Activated T-helper 1 cell treated with anti-CD3 and anti-CD28 coated beads, Interleukin-12 subunit alpha, Interleukin-12 subunit beta, Interleukin-2, Interleukin-4 antibody, amounts not matched to agents 30 ng/mL and 10 ng/mL and 1 ng/mL, durations not matched to agents 14 hours and 24 hours and 36 hours (primary cell): ENCODE measurements at regions of chr1 and their contacts with region 1.

Region 1: GRCh38 chr1:16217061-16217785 is 4.8 kb upstream of the ARHGEF19 start:
- DNase-seq: peak; percentile 92
- H3K4me3 Mint-ChIP-seq: peak overlapping the region; percentile 83
- H3K27ac Mint-ChIP-seq: no peak overlapping the region
- H3K4me1 Mint-ChIP-seq: peaks cover 22% of the 10 kb centered on the region
- H3K27me3 Mint-ChIP-seq: peaks cover 4% of the 10 kb centered on the region

Region 2: GRCh38 chr1:16101623-16102022 is 115.6 kb before region 1 on chr1:
- intact Hi-C with region 1: no loop called
- DNase-seq: no peak
- H3K4me3 Mint-ChIP-seq: no peak overlapping the region
- H3K27ac Mint-ChIP-seq: no peak overlapping the region
- H3K4me1 Mint-ChIP-seq: no peaks in the 10 kb centered on the region
- H3K27me3 Mint-ChIP-seq: peaks cover 27% of the 10 kb centered on the region

Region 3: DNA sequence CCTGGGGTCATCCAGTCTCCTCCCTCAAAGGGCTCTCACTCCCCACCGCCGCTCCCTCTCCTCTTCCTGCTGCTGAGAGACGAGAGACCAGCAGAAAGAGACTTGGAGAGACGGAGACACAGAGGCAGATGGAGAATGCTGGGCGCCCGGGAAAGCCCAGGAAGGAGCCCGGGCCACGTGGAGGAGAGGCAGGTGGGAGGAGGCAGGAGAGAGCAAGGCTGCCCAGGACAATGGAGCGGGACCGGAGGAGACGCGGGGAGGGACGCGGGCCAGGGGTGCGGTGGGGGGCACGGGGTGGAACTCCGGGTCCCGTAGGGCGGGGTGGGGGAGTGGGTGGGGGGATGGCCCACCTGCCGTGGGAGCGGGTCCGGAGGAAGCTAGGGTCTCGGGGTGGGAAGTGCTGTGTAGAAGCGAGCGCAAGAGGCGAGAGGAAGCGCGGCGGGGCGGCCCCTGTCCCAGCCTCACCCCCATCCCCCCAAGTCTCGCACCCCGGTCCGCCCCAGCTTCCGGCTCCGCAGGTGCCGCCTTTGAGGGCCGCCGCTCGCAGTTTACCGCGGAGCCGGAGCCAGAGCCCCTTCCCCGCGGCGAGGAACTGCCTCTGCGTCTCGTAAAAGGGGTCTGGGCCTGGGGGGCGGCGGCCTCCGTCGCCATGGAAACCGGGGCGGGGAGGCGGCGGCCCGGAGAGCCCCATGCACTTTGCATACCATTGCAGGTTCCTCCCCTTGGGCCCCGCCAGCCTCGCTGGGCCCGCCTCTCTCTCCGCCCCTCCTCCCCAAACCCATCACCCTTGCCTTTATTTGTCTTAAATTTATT is 49.7 kb before region 1 on chr1:
- intact Hi-C with region 1: loop called (anchors 2 kb)
- DNase-seq: peak; percentile 46
- H3K4me3 Mint-ChIP-seq: peak overlapping the region; percentile 30
- H3K27ac Mint-ChIP-seq: no peak overlapping the region
- H3K4me1 Mint-ChIP-seq: peaks cover 26% of the 10 kb centered on the region
- H3K27me3 Mint-ChIP-seq: peaks cover 41% of the 10 kb centered on the region